Naive thymus-derived CD8-positive, alpha-beta T cell (primary cell): ENCODE measurements at regions of chr10 and their contacts with region 1.

Region 1: DNA sequence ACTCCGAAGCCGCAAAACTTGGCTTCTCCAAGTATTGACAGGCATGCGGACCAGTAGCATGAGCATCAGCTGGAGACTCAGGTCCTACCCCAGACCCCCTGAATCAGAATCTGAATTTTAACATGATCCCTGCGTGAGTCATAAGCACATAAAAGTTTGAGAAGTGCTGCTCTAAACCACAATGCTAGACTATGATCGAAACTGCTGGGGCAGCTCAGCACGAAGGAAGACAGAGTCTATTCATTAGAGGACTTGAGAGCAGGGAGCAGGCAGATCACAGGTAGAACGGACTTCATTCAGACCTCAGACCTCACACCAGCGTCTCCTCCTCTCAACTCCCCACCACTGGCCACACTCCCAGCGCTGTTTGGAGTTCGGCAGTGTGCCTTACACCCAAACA is 16.9 kb downstream of the CAMK2G start:
- DNase-seq: no peak
- ATAC-seq: peak; percentile 31 to 53
- H3K4me3 Mint-ChIP-seq: peak overlapping the region; percentile 20 to 75 (median 62)
- H3K27ac Mint-ChIP-seq: peak overlapping the region; percentile 78 to 94 (median 90)
- H3K4me1 Mint-ChIP-seq: peaks cover 26 to 84% (median 72%) of the 10 kb centered on the region in 4 donors
- H3K27me3 Mint-ChIP-seq: no peaks in the 10 kb centered on the region

Region 2: GRCh38 chr10:73874267-73875138 is 17.1 kb after region 1 on chr10 and contains the start of gene CAMK2G:
- POLR2A ChIA-PET with region 1: interaction called, 106 read pairs
- DNase-seq: peak; percentile 75 to 92 (median 78)
- ATAC-seq: peak; percentile 75 to 82
- H3K4me3 Mint-ChIP-seq: peak within 1 kb of the TSS; percentile 87 to 97 (median 94)
- H3K27ac Mint-ChIP-seq: peak within 1 kb of the TSS; percentile 86 to 97 (median 95)
- H3K4me1 Mint-ChIP-seq: peaks cover 46 to 75% (median 73%) of the 10 kb centered on the region in 4 donors
- H3K27me3 Mint-ChIP-seq: no peaks in the 10 kb centered on the region
- polyA plus RNA-seq, gene CAMK2G: 4.6 to 6.7 (median 5.1) TPM

Region 3: DNA sequence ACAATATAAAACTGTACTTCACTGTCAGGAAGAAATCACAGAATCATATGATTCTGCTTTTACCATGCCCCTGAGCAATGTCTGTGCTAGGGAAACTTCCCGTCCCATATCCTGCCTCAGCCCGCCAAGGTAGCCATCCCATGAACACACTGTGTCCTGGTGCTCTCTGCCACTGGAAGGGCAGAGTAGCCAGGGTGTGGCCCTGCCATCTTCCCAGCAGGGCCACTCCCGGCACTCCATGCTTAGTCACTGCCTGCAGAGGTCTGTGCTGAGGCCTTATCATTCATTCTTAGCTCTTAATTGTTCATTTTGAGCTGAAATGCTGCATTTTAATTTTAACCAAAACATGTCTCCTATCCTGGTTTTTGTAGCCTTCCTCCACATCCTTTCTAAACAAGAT is 261.4 kb after region 1 on chr10:
- POLR2A ChIA-PET with region 1: no interaction called
- DNase-seq: no peak
- ATAC-seq: no peak
- H3K4me3 Mint-ChIP-seq: no peak overlapping the region
- H3K27ac Mint-ChIP-seq: peak overlapping the region in 7 of 10 donors; percentile 7 to 86 (median 68)
- H3K4me1 Mint-ChIP-seq: peaks cover 0 to 13% (median 7%) of the 10 kb centered on the region in 4 donors
- H3K27me3 Mint-ChIP-seq: no peaks in the 10 kb centered on the region